ENCODE measurements at regions of chr7 and their contacts with region 1.

Region 1: GRCh38 chr7:82234457-82235049 is 209.0 kb downstream of the CACNA2D1 start:
- DNase-seq: no peak
- H3K4me3 ChIP-seq: no peak overlapping the region
- H3K27ac ChIP-seq: no peak overlapping the region
- H3K4me1 ChIP-seq: peaks cover 9 to 13% (median 10%) of the 10 kb centered on the region in 4 donors
- H3K27me3 ChIP-seq: no peaks in the 10 kb centered on the region
- CTCF ChIP-seq: peak; percentile 55 to 68 (median 64)
- EP300 ChIP-seq: no peak
- POLR2A ChIP-seq: no peak

Region 2: GRCh38 chr7:82044497-82045080 is 190.0 kb before region 1 on chr7:
- intact Hi-C with region 1: loop called (anchors 10 kb)
- DNase-seq: no peak
- H3K4me3 ChIP-seq: no peak overlapping the region
- H3K27ac ChIP-seq: no peak overlapping the region
- H3K4me1 ChIP-seq: peaks cover 0 to 10% (median 6%) of the 10 kb centered on the region in 4 donors
- H3K27me3 ChIP-seq: no peaks in the 10 kb centered on the region
- CTCF ChIP-seq: peak; percentile 72 to 79 (median 74)
- EP300 ChIP-seq: no peak
- POLR2A ChIP-seq: no peak

Region 3: GRCh38 chr7:82312646-82313045 is 78.1 kb after region 1 on chr7:
- intact Hi-C with region 1: no loop called
- DNase-seq: no peak
- H3K4me3 ChIP-seq: no peak overlapping the region
- H3K27ac ChIP-seq: no peak overlapping the region
- H3K4me1 ChIP-seq: peaks cover 0 to 22% (median 12%) of the 10 kb centered on the region in 4 donors
- H3K27me3 ChIP-seq: no peaks in the 10 kb centered on the region
- CTCF ChIP-seq: no peak
- EP300 ChIP-seq: no peak
- POLR2A ChIP-seq: no peak

Region 4: DNA sequence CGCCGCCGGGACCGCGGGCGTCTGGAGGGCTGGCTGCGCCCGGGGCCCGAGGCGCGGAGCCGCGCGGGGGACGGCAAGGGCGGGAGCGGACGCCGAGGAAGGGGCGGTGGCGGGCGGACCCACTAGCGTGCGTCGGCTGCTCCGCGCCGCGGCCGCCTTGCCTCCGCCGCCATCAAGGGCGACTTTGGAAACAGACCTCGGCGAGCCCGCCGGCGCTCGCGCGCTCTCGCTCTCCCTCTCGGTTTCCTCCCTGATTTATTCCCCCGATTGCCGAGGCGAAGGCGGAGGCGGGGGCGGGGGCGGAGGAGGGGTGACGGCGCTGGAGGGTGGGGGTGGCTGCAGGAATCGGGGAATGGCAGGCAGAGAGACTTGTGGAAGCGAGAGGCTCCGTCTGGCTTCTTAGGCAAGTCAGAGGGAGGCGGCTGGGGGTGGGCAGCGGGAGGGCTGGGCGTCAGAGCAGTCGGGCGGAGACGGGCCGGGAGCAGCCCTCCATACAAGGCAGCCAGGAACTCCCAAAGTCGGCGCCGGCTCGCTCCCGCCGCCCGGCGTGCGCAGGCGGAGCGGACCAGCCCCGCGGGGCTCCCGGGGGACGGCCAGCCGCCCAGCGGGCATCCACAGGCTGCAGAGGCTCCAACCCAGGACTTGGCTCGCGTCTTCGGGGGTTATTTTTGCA is 209.1 kb after region 1 on chr7 and contains the start of gene CACNA2D1:
- intact Hi-C with region 1: loop called (anchors 2 kb)
- DNase-seq: peak; percentile 94
- H3K4me3 ChIP-seq: peak within 1 kb of the TSS; percentile 78 to 92 (median 86)
- H3K27ac ChIP-seq: peak within 1 kb of the TSS; percentile 92 to 97 (median 96)
- H3K4me1 ChIP-seq: peaks cover 0 to 35% (median 22%) of the 10 kb centered on the region in 4 donors
- H3K27me3 ChIP-seq: no peaks in the 10 kb centered on the region
- CTCF ChIP-seq: peak; percentile 32 to 47 (median 45)
- EP300 ChIP-seq: no peak
- POLR2A ChIP-seq: no peak
- total RNA-seq, gene CACNA2D1: 30.6 to 60.0 (median 45.7) TPM

Region 5: GRCh38 chr7:82481499-82482097 is 247.0 kb after region 1 on chr7:
- intact Hi-C with region 1: loop called (anchors 2 kb)
- DNase-seq: no peak
- H3K4me3 ChIP-seq: no peak overlapping the region
- H3K27ac ChIP-seq: no peak overlapping the region
- H3K4me1 ChIP-seq: no peaks in the 10 kb centered on the region
- H3K27me3 ChIP-seq: no peaks in the 10 kb centered on the region
- CTCF ChIP-seq: peak; percentile 72 to 87 (median 75)
- EP300 ChIP-seq: no peak
- POLR2A ChIP-seq: no peak

Region 6: GRCh38 chr7:82572195-82572880 is 337.8 kb after region 1 on chr7:
- intact Hi-C with region 1: loop called (anchors 5 kb)
- DNase-seq: peak; percentile 94
- H3K4me3 ChIP-seq: peak overlapping the region in 1 of 4 donors; percentile 1
- H3K27ac ChIP-seq: no peak overlapping the region
- H3K4me1 ChIP-seq: peaks cover 7 to 13% (median 9%) of the 10 kb centered on the region in 4 donors
- H3K27me3 ChIP-seq: no peaks in the 10 kb centered on the region
- CTCF ChIP-seq: peak; percentile 82 to 95 (median 89)
- EP300 ChIP-seq: no peak
- POLR2A ChIP-seq: no peak

Measured in esophagus muscularis mucosa (tissue), 4 donors.